ENCODE measurements at regions of chr12 and their contacts with region 1.

Region 1: GRCh38 chr12:6873094-6874014 is at the start of gene SPSB2:
- DNase-seq: peak; percentile 89 to 96 (median 92)
- ATAC-seq: peak; percentile 88
- H3K4me3 ChIP-seq: peak within 1 kb of the TSS; percentile 73
- H3K27ac ChIP-seq: peak within 1 kb of the TSS; percentile 78
- H3K4me1 ChIP-seq: peaks cover 29 to 44% of the 10 kb centered on the region in 2 experiments; a peak in 4 of 5 replicates
- H3K27me3 ChIP-seq: no peaks in the 10 kb centered on the region
- CTCF ChIP-seq: no peak
- EP300 ChIP-seq: no peak
- POLR2A ChIP-seq: peak; percentile 75
- RAD21 ChIP-seq: no peak
- polyA plus RNA-seq, gene SPSB2: 0.10 to 0.29 TPM

Region 2: DNA sequence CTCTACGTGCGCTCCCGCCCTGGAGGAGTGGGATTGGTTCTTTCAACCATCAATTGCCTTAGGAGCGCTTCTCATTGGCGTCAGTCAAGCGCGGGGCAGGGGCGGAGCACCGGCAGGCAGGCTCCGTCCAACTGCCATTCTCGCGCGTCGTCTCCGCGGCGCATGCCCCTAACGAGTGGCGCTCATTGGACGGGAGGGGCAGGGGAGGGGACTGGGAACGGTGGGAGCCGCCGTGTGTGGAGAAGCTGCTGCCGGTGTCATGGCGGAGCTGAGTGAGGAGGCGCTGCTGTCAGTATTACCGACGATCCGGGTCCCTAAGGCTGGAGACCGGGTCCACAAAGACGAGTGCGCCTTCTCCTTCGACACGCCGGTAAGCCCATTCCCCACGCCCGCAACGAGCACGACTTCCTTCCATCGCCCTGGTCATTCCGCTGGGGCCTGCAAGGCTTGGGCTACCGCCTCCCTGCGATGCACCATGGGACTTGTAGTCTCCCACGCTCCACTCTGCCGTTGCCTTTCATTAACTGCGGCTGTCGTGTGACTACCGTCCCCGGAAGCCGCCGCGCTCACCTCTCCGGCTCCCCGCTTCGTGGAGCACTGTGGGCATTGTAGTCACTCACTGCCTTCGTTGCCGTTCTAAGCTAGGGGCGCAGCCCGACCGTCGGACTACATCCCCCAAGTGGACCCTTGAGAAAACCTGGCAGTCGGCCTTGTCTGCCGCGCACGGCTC is 21.3 kb before region 1 on chr12 and contains the start of gene USP5:
- CTCF ChIA-PET with region 1: no interaction called
- POLR2A ChIA-PET with region 1: interaction called, 174 read pairs
- in situ Hi-C with region 1: no loop called
- intact Hi-C with region 1: no loop called
- DNase-seq: peak; percentile 87 to 98 (median 90)
- ATAC-seq: peak; percentile 87
- H3K4me3 ChIP-seq: peak within 1 kb of the TSS; percentile 79
- H3K27ac ChIP-seq: peak within 1 kb of the TSS; percentile 87
- H3K4me1 ChIP-seq: peaks cover 12 to 18% of the 10 kb centered on the region in 2 experiments; a peak in 4 of 5 replicates
- H3K27me3 ChIP-seq: no peaks in the 10 kb centered on the region
- CTCF ChIP-seq: 0 out of 6 replicates have a peak, but pooled peaks of 1 of the 3 experiments have one; percentile 1
- EP300 ChIP-seq: no peak
- POLR2A ChIP-seq: peak; percentile 79
- RAD21 ChIP-seq: no peak
- polyA plus RNA-seq, gene USP5: 1.4 to 3.4 TPM

Region 3: GRCh38 chr12:6890789-6891645 is 17.7 kb after region 1 on chr12:
- CTCF ChIA-PET with region 1: no interaction called
- POLR2A ChIA-PET with region 1: interaction called, 17 read pairs
- in situ Hi-C with region 1: no loop called
- intact Hi-C with region 1: loop called (anchors 2 kb)
- DNase-seq: peak; percentile 89 to 96 (median 92)
- ATAC-seq: peak; percentile 97
- H3K4me3 ChIP-seq: peak overlapping the region; percentile 42
- H3K27ac ChIP-seq: peak overlapping the region; percentile 96
- H3K4me1 ChIP-seq: peaks cover 12 to 19% of the 10 kb centered on the region in 2 experiments; a peak in 4 of 5 replicates
- H3K27me3 ChIP-seq: no peaks in the 10 kb centered on the region
- CTCF ChIP-seq: peak; percentile 78 to 95 (median 88)
- EP300 ChIP-seq: peak; percentile 23; the same call in 1 of the 2 replicates
- POLR2A ChIP-seq: peak; percentile 87
- RAD21 ChIP-seq: peak; percentile 65 to 71

Region 4: GRCh38 chr12:6937481-6938297 is 64.3 kb after region 1 on chr12:
- CTCF ChIA-PET with region 1: no interaction called
- POLR2A ChIA-PET with region 1: interaction called, 24 read pairs
- in situ Hi-C with region 1: loop called (anchors 5 kb)
- intact Hi-C with region 1: loop called (anchors 5 kb)
- DNase-seq: peak; percentile 61 to 95 (median 72)
- ATAC-seq: peak; percentile 95
- H3K4me3 ChIP-seq: peak overlapping the region; percentile 44
- H3K27ac ChIP-seq: peak overlapping the region; percentile 92
- H3K4me1 ChIP-seq: peaks cover 10 to 55% of the 10 kb centered on the region in 2 experiments; a peak in 4 of 5 replicates
- H3K27me3 ChIP-seq: no peaks in the 10 kb centered on the region
- CTCF ChIP-seq: peak; percentile 82 to 91 (median 86)
- EP300 ChIP-seq: no peak
- POLR2A ChIP-seq: peak; percentile 81
- RAD21 ChIP-seq: peak; percentile 27 to 55

Measured in K562 (cell line).